Mucosa of descending colon (tissue), 3 donors: ENCODE measurements at regions of chr5 and their contacts with region 1.

Region 1: GRCh38 chr5:33423018-33423630 is 17.6 kb upstream of the TARS1 start:
- DNase-seq: no peak
- ATAC-seq: no peak
- H3K4me3 ChIP-seq: no peak overlapping the region
- H3K4me1 ChIP-seq: no peaks in the 10 kb centered on the region
- CTCF ChIP-seq: no peak

Region 2: DNA sequence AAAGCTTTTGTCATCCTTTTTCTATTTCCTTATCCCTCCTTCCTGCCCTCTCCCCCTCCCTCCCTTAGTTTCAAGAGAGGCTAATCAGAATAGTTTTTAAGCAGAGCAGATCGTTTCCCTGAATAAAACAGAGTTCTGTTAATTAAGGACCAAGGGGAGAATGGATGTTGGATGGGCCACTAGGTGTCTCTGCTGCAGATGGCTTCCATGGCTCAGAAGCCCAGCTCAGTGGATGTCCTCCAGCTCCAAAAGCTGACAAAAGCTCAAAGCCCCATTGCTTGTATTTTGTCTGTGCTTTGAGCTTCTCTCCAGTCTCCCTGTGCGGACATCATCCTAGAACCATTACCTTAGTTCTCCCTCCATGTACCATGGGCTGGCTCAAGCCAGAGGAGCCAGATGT is 733.0 kb before region 1 on chr5:
- intact Hi-C with region 1: loop called in 1 of 2 experiments (anchors 10 kb)
- DNase-seq: no peak
- ATAC-seq: no peak
- H3K4me3 ChIP-seq: no peak overlapping the region
- H3K4me1 ChIP-seq: no peaks in the 10 kb centered on the region
- CTCF ChIP-seq: no peak

Region 3: DNA sequence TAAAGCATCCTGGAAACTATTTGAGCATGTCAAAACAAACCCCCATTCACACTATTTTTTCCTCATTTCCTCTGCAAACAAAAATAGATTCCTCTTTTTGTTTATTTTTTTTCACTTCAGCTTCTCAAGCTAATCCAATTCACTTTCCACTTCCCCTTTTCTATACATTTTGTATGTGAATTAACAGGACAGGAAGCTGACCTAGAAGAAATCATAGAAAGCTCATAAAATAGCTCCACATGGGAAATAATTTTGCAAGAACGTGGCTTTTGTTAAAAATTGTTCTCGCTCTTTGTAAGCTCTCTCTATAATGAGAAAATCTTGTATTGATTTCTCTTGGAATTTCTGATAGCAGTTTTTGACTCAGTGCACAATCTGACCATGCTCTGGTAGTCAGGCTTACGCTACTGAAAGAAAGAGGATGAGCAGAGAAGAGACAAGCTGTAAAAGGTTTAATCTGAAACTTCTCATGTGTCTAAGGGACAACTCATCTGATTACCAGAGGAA is 252.9 kb after region 1 on chr5:
- intact Hi-C with region 1: no loop called
- DNase-seq: no peak
- ATAC-seq: no peak
- H3K4me3 ChIP-seq: no peak overlapping the region
- H3K4me1 ChIP-seq: no peaks in the 10 kb centered on the region
- CTCF ChIP-seq: no peak